ENCODE measurements at regions of chr19 and their contacts with region 1.

Region 1: GRCh38 chr19:45523642-45524256 is 16.5 kb downstream of the VASP start:
- DNase-seq: peak; percentile 90
- H3K4me3 ChIP-seq: no peak overlapping the region
- H3K27ac ChIP-seq: no peak overlapping the region
- H3K4me1 ChIP-seq: no peaks in the 10 kb centered on the region
- H3K27me3 ChIP-seq: no peaks in the 10 kb centered on the region
- CTCF ChIP-seq: peak; percentile 84 to 94 (median 91)
- POLR2A ChIP-seq: no peak

Region 2: DNA sequence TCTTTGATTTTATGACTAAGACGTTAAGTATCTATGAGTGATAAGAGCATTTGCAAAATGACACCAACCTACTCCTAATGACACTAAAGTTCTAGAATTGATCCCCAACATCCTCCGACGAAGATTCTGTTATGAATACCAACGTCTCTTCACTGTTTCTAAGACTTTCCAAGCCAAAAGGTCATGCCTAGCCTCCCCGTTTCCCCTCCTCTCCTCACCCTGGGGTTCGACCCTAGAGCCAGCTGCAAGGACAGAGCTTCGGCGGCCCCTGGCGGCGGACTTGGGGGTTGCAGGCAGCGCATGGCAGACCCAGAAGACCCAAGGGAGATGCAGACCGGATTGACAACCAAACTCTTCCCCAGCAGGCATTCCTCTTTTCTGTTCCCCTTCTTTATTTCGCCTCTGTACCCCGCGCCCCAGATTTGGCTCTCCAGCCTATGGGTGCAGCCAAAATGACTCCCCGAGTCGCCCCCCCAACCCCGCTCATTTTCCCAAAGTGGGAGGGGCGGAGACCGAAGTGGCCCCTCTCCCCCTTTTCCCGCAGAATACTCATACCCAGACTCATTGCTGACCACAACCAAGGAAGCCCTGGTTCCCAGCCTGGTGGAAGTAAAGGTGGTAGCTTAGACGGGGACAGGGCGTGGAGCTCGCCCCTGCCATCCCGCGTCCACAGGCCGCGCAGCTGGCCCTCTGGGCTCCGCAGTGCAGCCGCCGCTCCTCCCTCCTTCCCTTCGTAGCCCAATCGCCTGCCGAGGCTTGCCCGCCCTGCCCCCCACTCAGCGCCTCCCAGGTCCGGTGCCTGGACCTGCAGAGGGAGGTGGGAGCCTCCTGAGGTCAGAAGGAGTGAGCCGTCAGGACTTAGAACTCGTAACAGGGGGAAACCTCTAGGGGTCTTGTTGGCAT is 119.5 kb after region 1 on chr19:
- intact Hi-C with region 1: loop called (anchors 10 kb)
- DNase-seq: peak; percentile 92
- H3K4me3 ChIP-seq: no peak overlapping the region
- H3K27ac ChIP-seq: no peak overlapping the region
- H3K4me1 ChIP-seq: peaks cover 29% of the 10 kb centered on the region
- H3K27me3 ChIP-seq: no peaks in the 10 kb centered on the region
- CTCF ChIP-seq: peak; percentile 94 to 98 (median 95)
- POLR2A ChIP-seq: no peak